ENCODE measurements at regions of chr2 and their contacts with region 1.

Region 1: DNA sequence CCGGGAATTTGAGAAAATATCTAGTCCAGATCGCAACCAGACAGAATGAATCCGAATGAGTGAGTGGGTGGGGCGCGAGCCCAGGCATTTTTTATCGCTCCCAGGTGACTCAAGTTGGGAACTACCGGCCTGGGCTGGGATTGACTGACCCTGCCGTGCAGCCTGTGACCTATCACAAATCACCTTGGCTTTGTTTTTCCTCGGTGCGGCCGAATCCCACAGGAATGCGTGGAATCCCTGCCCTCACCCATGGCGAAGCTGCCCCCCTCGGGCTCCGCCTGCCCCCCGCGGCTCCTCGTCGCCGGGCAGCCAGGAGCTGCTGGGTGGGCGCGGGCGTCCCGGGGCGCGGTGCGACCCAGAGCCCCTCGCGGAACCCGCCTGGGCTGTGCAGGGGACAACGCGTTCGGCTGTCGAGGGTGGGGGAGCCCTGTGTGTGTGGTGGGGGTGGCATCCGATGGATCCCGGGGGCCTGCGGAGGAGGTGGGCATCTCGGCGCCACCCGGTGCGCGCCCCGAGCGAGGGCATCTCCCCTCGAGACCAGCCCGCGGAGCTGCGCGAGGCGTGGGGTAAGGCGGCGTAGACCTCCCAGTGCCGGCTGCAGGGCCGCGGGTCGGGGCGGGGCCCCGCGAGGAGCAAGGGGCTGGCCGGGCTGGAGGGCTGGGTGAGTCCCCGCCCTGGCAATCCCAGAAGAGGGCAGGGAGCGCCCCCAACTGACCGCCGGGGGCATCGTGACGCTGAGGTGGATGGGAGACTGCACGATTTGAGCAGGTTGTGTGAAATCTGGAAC is 16.5 kb downstream of the B3GNT7 start:
- DNase-seq: peak; percentile 71
- ATAC-seq: peak; percentile 100
- H3K4me3 ChIP-seq: peak overlapping the region; percentile 63
- H3K27ac ChIP-seq: peak overlapping the region; percentile 42
- H3K4me1 ChIP-seq: 0 out of 2 replicates have a peak, but pooled peaks cover 3% of the 10 kb centered on the region
- H3K27me3 ChIP-seq: no peaks in the 10 kb centered on the region
- CTCF ChIP-seq: peak; percentile 98
- POLR2A ChIP-seq: no peak
- RAD21 ChIP-seq: peak; percentile 93

Region 2: GRCh38 chr2:230902180-230902899 is 509.7 kb before region 1 on chr2:
- CTCF ChIA-PET with region 1: no interaction called
- POLR2A ChIA-PET with region 1: no interaction called
- dilution Hi-C with region 1: no loop called
- in situ Hi-C with region 1: no loop called
- intact Hi-C with region 1: loop called (anchors 2 kb)
- DNase-seq: peak; percentile 76
- ATAC-seq: peak; percentile 99
- H3K4me3 ChIP-seq: no peak overlapping the region
- H3K27ac ChIP-seq: no peak overlapping the region
- H3K4me1 ChIP-seq: no peaks in the 10 kb centered on the region
- H3K27me3 ChIP-seq: peaks cover 31% of the 10 kb centered on the region
- CTCF ChIP-seq: peak; percentile 95
- POLR2A ChIP-seq: no peak
- RAD21 ChIP-seq: peak; percentile 94

Region 3: DNA sequence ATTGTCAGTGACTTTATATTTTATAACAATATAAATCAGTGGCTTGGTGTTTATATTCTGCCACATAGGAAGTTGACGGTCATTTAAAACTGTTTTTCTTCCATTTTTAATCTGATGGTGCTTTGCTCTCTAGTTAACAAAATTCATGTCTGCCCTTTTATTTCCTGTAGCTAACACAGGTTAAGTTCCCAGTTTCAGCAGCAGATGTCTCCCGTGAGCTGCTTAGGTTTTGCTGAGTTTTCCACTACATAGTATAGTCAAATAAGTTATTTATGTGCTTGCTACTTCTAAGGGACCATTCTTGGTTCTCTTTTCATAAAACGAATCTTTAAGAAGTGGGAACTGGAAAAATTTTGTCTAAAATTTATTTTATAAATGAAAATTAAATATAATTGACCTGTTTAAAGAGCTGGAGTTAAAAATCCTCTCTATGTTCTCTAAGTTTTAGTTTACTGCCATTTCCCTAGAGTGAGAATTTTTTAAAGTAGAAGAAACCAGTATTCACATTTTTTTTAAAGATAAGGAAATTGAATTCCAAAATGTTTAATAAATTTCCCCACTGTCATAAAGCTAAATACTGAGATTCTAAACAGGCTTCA is 307.8 kb before region 1 on chr2:
- CTCF ChIA-PET with region 1: interaction called, 5 read pairs
- POLR2A ChIA-PET with region 1: interaction called, 19 read pairs
- dilution Hi-C with region 1: no loop called
- in situ Hi-C with region 1: loop called (anchors 10 kb)
- intact Hi-C with region 1: loop called (anchors 2 kb)
- DNase-seq: peak; percentile 75
- ATAC-seq: peak; percentile 94
- H3K4me3 ChIP-seq: no peak overlapping the region
- H3K27ac ChIP-seq: peak overlapping the region; percentile 15; the same call in 1 of the 2 replicates
- H3K4me1 ChIP-seq: peaks cover 7% of the 10 kb centered on the region
- H3K27me3 ChIP-seq: no peaks in the 10 kb centered on the region
- CTCF ChIP-seq: peak; percentile 89
- POLR2A ChIP-seq: no peak
- RAD21 ChIP-seq: peak; percentile 90

Region 4: DNA sequence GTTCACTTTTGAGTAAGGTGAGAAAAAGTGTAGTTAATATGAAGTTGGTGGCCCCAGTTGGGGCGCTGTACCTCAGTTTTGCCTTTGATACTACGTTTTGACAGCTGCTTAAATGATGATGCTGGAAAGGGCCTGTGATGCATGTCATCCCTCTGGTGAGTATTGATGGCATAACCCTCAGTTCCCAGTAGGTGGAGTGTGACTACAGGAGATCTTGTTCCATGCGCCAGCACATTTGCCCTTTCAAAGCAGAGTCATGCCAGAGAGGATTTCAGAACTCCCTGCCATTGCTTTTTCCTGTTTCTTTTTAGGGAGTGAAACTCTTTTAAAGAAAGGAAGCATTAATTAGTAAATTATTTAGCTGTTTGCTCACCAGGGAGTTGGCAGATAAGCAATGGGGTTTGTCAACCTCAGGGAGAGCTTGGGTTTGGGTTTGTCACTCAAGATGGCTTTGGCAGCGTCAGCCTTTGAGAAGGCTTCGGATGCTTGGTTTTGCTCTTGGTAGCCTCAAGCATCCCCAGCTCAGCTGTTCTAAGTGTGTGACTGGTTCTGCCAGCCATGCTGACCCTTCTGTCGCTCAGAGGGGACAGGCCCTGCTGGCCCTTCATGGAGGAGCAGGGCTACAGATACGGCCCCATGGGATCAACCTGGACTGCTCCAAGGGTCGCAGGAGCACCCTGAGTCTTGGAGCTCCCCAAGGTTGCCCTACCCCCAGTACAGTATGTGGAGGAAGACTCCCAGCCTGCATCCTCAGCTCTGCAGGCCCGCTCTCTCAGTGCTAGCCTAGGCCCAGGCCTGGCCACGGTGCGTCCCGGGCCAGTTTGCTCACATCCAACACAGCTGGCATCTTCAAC is 184.5 kb before region 1 on chr2:
- CTCF ChIA-PET with region 1: interaction called, 5 read pairs
- POLR2A ChIA-PET with region 1: no interaction called
- dilution Hi-C with region 1: no loop called
- in situ Hi-C with region 1: loop called (anchors 5 kb)
- intact Hi-C with region 1: loop called (anchors 1 kb)
- DNase-seq: peak; percentile 79
- ATAC-seq: peak; percentile 75
- H3K4me3 ChIP-seq: no peak overlapping the region
- H3K27ac ChIP-seq: peak overlapping the region; percentile 36; the same call in 1 of the 2 replicates
- H3K4me1 ChIP-seq: peaks cover 20% of the 10 kb centered on the region
- H3K27me3 ChIP-seq: no peaks in the 10 kb centered on the region
- CTCF ChIP-seq: peak; percentile 80
- POLR2A ChIP-seq: 0 out of 2 replicates have a peak, but pooled peaks have one; percentile 29
- RAD21 ChIP-seq: peak; percentile 87

Region 5: GRCh38 chr2:231297108-231297908 is 114.7 kb before region 1 on chr2:
- CTCF ChIA-PET with region 1: interaction called, 7 read pairs
- POLR2A ChIA-PET with region 1: no interaction called
- dilution Hi-C with region 1: no loop called
- in situ Hi-C with region 1: loop called (anchors 5 kb)
- intact Hi-C with region 1: loop called (anchors 1 kb)
- DNase-seq: peak; percentile 54
- ATAC-seq: peak; percentile 98
- H3K4me3 ChIP-seq: no peak overlapping the region
- H3K27ac ChIP-seq: no peak overlapping the region
- H3K4me1 ChIP-seq: 0 out of 2 replicates have a peak, but pooled peaks cover 2% of the 10 kb centered on the region
- H3K27me3 ChIP-seq: no peaks in the 10 kb centered on the region
- CTCF ChIP-seq: peak; percentile 66
- POLR2A ChIP-seq: no peak
- RAD21 ChIP-seq: peak; percentile 78

Region 6: GRCh38 chr2:231706731-231707624 is 295.0 kb after region 1 on chr2:
- CTCF ChIA-PET with region 1: no interaction called
- POLR2A ChIA-PET with region 1: no interaction called
- dilution Hi-C with region 1: no loop called
- in situ Hi-C with region 1: no loop called
- intact Hi-C with region 1: no loop called
- DNase-seq: peak; percentile 99
- ATAC-seq: peak; percentile 56
- H3K4me3 ChIP-seq: peak overlapping the region; percentile 63
- H3K27ac ChIP-seq: peak overlapping the region; percentile 94
- H3K4me1 ChIP-seq: peaks cover 7% of the 10 kb centered on the region
- H3K27me3 ChIP-seq: no peaks in the 10 kb centered on the region
- CTCF ChIP-seq: peak; percentile 99
- POLR2A ChIP-seq: no peak; the same call in 1 of the 2 replicates
- RAD21 ChIP-seq: no peak; the same call in 1 of the 2 replicates

Measured in IMR-90 (cell line).